A549 (cell line): ENCODE measurements at regions of chr12 and their contacts with region 1.

Region 1: GRCh38 chr12:69639400-69640016 is 28.8 kb upstream of the LRRC10 start:
- DNase-seq: peak; percentile 79 to 82
- ATAC-seq: peak; percentile 90 to 97
- H3K4me3 ChIP-seq: no peak overlapping the region
- H3K27ac ChIP-seq: no peak overlapping the region
- H3K4me1 ChIP-seq: no peaks in the 10 kb centered on the region
- CTCF ChIP-seq: peak; percentile 86
- EP300 ChIP-seq: no peak
- POLR2A ChIP-seq: no peak
- RAD21 ChIP-seq: peak; percentile 68 to 75

Region 2: GRCh38 chr12:69359531-69360347 is 279.8 kb before region 1 on chr12 and contains the start of gene YEATS4:
- CTCF ChIA-PET with region 1: interaction called, 39 read pairs
- POLR2A ChIA-PET with region 1: no interaction called
- DNase-seq: peak; percentile 95 to 96
- ATAC-seq: peak; percentile 91 to 94
- H3K4me3 ChIP-seq: peak within 1 kb of the TSS; percentile 83
- H3K27ac ChIP-seq: peak within 1 kb of the TSS; percentile 94 to 96
- H3K4me1 ChIP-seq: peaks cover 14% of the 10 kb centered on the region
- CTCF ChIP-seq: no peak
- EP300 ChIP-seq: no peak
- POLR2A ChIP-seq: peak; percentile 87
- RAD21 ChIP-seq: no peak
- polyA plus RNA-seq, gene YEATS4: 43.4 and 70.1 TPM in 2 replicates

Region 3: GRCh38 chr12:69388371-69388770 is 251.1 kb before region 1 on chr12:
- CTCF ChIA-PET with region 1: interaction called, 18 read pairs
- POLR2A ChIA-PET with region 1: no interaction called
- DNase-seq: peak; percentile 11 to 68
- ATAC-seq: peak; percentile 68 to 77; a peak in 5 of 6 replicates
- H3K4me3 ChIP-seq: no peak overlapping the region
- H3K27ac ChIP-seq: peak overlapping the region; percentile 6 to 62; a peak in 3 of 6 replicates
- H3K4me1 ChIP-seq: peaks cover 32% of the 10 kb centered on the region
- CTCF ChIP-seq: peak; percentile 78
- EP300 ChIP-seq: no peak
- POLR2A ChIP-seq: no peak
- RAD21 ChIP-seq: peak; percentile 81 to 83

Region 4: GRCh38 chr12:69610126-69610525 is 29.4 kb before region 1 on chr12:
- CTCF ChIA-PET with region 1: interaction called, 53 read pairs
- POLR2A ChIA-PET with region 1: no interaction called
- DNase-seq: no peak
- ATAC-seq: no peak
- H3K4me3 ChIP-seq: no peak overlapping the region
- H3K27ac ChIP-seq: no peak overlapping the region
- H3K4me1 ChIP-seq: no peaks in the 10 kb centered on the region
- CTCF ChIP-seq: no peak
- EP300 ChIP-seq: no peak
- POLR2A ChIP-seq: no peak
- RAD21 ChIP-seq: no peak

Region 5: DNA sequence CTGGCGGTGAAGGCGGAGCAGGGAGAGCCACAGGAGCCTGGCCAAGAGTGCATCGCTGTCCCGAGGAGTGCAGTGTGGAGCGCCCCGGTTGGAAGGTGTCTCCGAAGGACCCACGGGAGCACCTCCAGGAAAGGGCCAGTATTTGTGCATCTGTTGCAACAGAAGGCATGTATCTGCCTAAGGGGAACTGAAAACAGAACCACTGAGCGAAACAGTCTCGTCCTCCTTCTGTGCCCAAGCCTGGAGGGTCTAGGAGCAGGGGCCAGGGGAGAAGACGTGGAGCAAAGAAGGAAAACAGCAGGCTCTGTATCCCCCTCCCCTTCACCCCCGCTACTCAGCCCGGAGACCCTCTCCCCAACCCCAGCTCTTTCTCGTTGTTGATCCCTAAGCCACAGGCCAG is 23.5 kb before region 1 on chr12:
- CTCF ChIA-PET with region 1: interaction called, 53 read pairs
- POLR2A ChIA-PET with region 1: no interaction called
- DNase-seq: no peak
- ATAC-seq: no peak; a peak in 1 of 6 replicates
- H3K4me3 ChIP-seq: no peak overlapping the region
- H3K27ac ChIP-seq: no peak overlapping the region
- H3K4me1 ChIP-seq: no peaks in the 10 kb centered on the region
- CTCF ChIP-seq: no peak
- EP300 ChIP-seq: no peak
- POLR2A ChIP-seq: no peak
- RAD21 ChIP-seq: no peak

Region 6: GRCh38 chr12:69655377-69656336 is 16.1 kb after region 1 on chr12:
- CTCF ChIA-PET with region 1: interaction called, 22 read pairs
- POLR2A ChIA-PET with region 1: no interaction called
- DNase-seq: peak in 1 of 2 experiments; percentile 39
- ATAC-seq: peak in 1 of 2 experiments; percentile 70; a peak in 3 of 6 replicates
- H3K4me3 ChIP-seq: no peak overlapping the region
- H3K27ac ChIP-seq: peak overlapping the region; percentile 45 to 61
- H3K4me1 ChIP-seq: peaks cover 11% of the 10 kb centered on the region
- CTCF ChIP-seq: no peak
- EP300 ChIP-seq: no peak
- POLR2A ChIP-seq: no peak
- RAD21 ChIP-seq: no peak